ENCODE measurements at regions of chr20 and their contacts with region 1.

Region 1: GRCh38 chr20:10673988-10674711 is at the start of gene JAG1:
- DNase-seq: peak; percentile 58
- H3K4me3 ChIP-seq: peak within 1 kb of the TSS; percentile 92 to 97 (median 94)
- H3K27ac ChIP-seq: peak within 1 kb of the TSS; percentile 97 to 100 (median 98)
- H3K4me1 ChIP-seq: peaks cover 7 to 49% (median 18%) of the 10 kb centered on the region in 3 donors
- H3K27me3 ChIP-seq: no peaks in the 10 kb centered on the region
- CTCF ChIP-seq: no peak
- POLR2A ChIP-seq: peak in 2 of 4 donors; percentile 78 to 91
- total RNA-seq, gene JAG1: 89.6 to 182 (median 123) TPM

Region 2: DNA sequence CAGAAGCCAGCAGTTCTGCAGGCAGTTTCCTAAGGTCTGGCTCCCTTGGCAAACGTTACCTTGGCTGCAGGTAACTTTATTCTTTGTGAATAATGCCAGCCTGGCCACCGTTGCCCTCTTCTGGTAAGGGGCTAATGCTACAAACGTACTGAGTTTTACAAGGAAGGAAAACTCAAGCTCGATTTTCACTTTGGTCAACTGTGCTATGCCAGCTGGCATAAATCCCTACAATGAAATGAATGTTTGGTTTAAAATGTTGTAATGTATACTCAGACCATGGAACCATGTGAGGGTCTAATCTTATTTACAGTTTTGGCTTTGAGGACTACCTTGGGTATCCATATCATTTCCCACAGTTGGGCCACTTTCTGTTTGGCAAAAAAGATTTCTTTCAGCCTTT is 137.6 kb before region 1 on chr20:
- intact Hi-C with region 1: no loop called
- DNase-seq: no peak
- H3K4me3 ChIP-seq: no peak overlapping the region
- H3K27ac ChIP-seq: peak overlapping the region in 1 of 4 donors; percentile 11
- H3K4me1 ChIP-seq: peaks cover 9 to 35% (median 11%) of the 10 kb centered on the region in 3 donors
- H3K27me3 ChIP-seq: no peaks in the 10 kb centered on the region
- CTCF ChIP-seq: peak in 5 of 6 experiments; percentile 29 to 63 (median 48)
- POLR2A ChIP-seq: no peak

Region 3: DNA sequence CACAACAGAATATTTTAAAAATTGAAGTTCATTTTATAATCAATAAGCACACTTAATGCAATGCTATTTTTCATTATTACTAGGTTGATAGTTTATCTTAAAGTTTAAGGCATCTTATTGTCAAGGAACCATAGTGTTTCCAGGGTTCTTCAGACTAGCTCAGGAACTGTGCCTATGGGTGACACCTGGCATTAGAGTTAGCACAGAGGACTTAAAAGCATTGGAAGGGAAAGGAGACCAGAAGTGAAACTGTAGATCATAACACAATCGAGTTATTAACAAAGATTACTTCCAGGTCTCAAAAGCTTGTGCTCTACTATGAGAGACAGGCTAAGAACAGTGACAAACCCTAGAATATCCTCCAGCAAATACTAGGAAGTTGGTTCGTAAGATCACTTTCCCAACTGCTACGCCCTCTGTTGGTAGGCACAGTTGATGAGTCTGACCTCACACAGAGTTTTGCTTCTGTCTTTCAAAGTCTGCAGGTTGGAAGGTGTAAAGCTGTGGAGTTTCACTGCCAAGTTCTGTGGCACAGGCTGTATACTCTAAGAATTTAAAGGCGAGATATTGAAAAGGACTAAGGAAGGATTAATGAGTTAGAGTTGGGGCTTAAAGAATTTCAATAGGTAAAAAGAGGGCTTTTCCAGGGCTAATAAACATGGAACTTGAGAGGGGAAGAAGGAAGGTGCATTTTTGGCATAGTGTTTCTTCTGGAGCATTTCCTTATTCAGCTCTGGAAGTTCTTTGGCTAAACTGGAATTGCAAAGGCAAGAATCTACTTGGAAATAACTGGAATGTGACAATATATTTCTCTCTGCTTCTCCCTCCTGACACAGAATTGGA is 531.0 kb after region 1 on chr20:
- intact Hi-C with region 1: loop called (anchors 10 kb)
- DNase-seq: no peak
- H3K4me3 ChIP-seq: no peak overlapping the region
- H3K27ac ChIP-seq: peak overlapping the region; percentile 37 to 74 (median 56)
- H3K4me1 ChIP-seq: peaks cover 0 to 42% (median 17%) of the 10 kb centered on the region in 3 donors
- H3K27me3 ChIP-seq: no peaks in the 10 kb centered on the region
- CTCF ChIP-seq: peak in 5 of 6 experiments; percentile 61 to 90 (median 83)
- POLR2A ChIP-seq: no peak

Region 4: DNA sequence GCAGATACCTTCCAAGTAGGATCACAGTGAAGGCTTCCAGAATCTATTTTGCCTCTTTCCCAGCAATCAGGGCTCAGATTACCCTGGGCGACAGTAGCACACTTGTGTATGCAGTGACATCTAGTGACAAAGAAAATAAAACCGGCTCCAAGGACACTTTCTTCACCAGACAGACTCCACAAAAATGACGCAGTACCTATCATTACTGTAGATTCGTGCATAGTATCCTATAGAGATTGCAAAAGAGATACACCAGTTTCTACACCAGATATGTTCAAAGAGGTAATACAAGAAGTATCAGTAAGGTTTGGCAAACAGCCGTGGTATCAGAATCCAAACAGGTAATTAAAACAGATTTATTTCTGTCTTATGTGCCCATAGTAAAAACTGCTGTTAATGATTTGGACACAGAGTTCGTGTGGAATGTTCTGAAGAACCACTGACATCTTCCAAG is 600.0 kb after region 1 on chr20:
- intact Hi-C with region 1: loop called (anchors 10 kb)
- DNase-seq: no peak
- H3K4me3 ChIP-seq: no peak overlapping the region
- H3K27ac ChIP-seq: no peak overlapping the region
- H3K4me1 ChIP-seq: peaks cover 0 to 22% (median 4%) of the 10 kb centered on the region in 3 donors
- H3K27me3 ChIP-seq: no peaks in the 10 kb centered on the region
- CTCF ChIP-seq: peak in 5 of 6 experiments; percentile 35 to 69 (median 45)
- POLR2A ChIP-seq: no peak

Measured in esophagus squamous epithelium (tissue), 5 donors.